Sigmoid colon (tissue), 7 donors: ENCODE measurements at regions of chr3 and their contacts with region 1.

Region 1: GRCh38 chr3:30553641-30554316 is 52.6 kb upstream of the TGFBR2 start:
- DNase-seq: no peak
- H3K4me3 ChIP-seq: no peak overlapping the region
- H3K27ac ChIP-seq: no peak overlapping the region
- H3K4me1 ChIP-seq: peaks cover 0 to 7% (median 2%) of the 10 kb centered on the region in 4 donors
- H3K27me3 ChIP-seq: no peaks in the 10 kb centered on the region
- CTCF ChIP-seq: no peak
- EP300 ChIP-seq: no peak
- POLR2A ChIP-seq: no peak

Region 2: DNA sequence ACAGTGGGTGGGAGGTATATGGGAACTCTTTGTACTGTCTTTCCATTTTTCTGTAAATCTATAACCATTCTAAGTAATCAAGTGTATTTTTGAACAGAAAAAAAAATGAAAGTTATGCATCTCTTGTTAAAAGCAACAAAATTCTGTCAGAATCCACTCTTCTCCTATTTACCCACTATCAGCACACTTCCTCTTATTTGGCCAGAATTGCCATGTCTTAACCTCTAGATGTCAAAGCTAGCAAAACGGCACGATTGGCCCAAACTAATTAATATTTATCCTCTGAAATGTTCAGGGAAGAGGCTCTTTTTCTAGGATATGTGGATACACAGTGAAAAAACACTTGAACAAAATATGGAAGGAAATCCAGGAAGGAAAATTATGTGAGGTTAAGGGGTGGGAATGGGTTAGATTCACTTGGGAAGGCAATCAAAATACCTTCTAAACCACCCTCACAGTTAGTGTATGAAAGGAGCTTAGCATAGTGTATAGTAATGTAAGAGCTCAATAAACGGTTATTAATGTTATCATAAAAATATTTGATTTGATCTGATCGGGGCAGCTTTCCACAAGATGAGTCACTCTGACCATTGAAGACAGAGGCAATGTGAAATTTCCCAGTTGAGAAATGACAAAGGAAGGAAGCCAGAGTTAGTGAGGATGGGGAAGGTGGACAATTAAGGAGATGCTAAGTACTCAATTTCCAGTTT is 32.5 kb after region 1 on chr3:
- intact Hi-C with region 1: loop called (anchors 5 kb)
- DNase-seq: no peak
- H3K4me3 ChIP-seq: no peak overlapping the region
- H3K27ac ChIP-seq: no peak overlapping the region
- H3K4me1 ChIP-seq: peaks cover 0 to 10% (median 7%) of the 10 kb centered on the region in 4 donors
- H3K27me3 ChIP-seq: no peaks in the 10 kb centered on the region
- CTCF ChIP-seq: no peak
- EP300 ChIP-seq: no peak
- POLR2A ChIP-seq: no peak